ENCODE measurements at regions of chr21 and their contacts with region 1.

Region 1: DNA sequence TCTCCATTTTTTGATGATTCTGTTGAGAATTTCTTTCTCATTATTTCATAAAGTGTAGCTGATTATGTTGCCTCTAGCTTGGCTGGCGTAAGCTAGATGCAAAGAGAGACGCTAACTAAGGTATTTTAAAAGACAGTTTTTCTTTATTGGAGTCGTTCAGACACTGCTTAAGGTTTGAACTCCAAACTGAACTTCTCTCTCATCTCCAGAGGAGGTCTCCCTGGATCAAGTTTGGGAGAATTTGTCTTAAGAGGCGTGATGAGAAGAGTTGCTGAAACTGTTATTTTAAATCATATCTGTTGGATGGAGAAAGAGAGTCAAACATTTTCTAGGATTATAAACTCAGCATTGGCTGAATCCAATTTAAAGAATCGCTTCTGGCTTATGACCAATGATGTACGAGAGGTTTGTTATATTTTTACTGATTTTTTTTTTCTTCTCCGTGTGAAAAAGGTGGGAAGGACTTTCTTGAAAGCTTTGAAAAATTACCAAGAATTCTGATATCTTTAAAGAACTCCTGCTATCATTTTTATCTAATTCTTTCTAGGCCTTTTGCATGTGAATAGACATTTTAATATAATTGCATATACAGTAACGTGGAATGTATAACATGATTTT is 34.0 kb downstream of the MAP3K7CL start:
- DNase-seq: peak; percentile 89
- H3K4me3 Mint-ChIP-seq: no peak overlapping the region
- H3K27ac Mint-ChIP-seq: peak overlapping the region; percentile 93
- H3K4me1 Mint-ChIP-seq: peaks cover 49% of the 10 kb centered on the region
- H3K27me3 Mint-ChIP-seq: no peaks in the 10 kb centered on the region
- CTCF ChIP-seq: peak; percentile 84

Region 2: GRCh38 chr21:29145354-29145782 is 19.1 kb before region 1 on chr21:
- CTCF ChIA-PET with region 1: interaction called, 17 read pairs
- POLR2A ChIA-PET with region 1: interaction called, 39 read pairs
- intact Hi-C with region 1: loop called (anchors 1 kb)
- DNase-seq: peak; percentile 91
- H3K4me3 Mint-ChIP-seq: peak overlapping the region; percentile 39
- H3K27ac Mint-ChIP-seq: peak overlapping the region; percentile 92
- H3K4me1 Mint-ChIP-seq: peaks cover 23% of the 10 kb centered on the region
- H3K27me3 Mint-ChIP-seq: no peaks in the 10 kb centered on the region
- CTCF ChIP-seq: no peak

Region 3: DNA sequence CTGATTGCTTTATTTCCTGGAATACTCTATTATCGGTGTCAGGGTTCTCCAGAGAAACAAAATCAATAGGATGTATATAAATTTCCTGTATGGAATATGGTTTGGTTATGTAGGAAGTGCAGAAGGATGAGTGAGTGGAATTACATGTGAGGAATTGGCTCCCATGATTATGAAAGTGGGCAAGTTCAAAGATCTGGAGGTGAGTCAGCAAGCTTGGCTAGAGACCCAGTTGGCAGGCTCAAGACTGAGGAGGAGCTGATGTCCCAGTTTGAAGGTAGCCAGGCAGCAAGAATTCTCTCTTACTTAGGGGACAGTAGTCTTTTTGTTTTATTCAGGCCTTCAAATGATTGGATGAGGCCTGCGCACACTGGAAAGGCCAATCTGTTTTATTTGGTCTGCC is 23.5 kb after region 1 on chr21:
- CTCF ChIA-PET with region 1: interaction called, 16 read pairs
- POLR2A ChIA-PET with region 1: interaction called, 21 read pairs
- intact Hi-C with region 1: no loop called
- DNase-seq: peak; percentile 95
- H3K4me3 Mint-ChIP-seq: peak overlapping the region; percentile 51
- H3K27ac Mint-ChIP-seq: peak overlapping the region; percentile 84
- H3K4me1 Mint-ChIP-seq: peaks cover 43% of the 10 kb centered on the region
- H3K27me3 Mint-ChIP-seq: no peaks in the 10 kb centered on the region
- CTCF ChIP-seq: no peak

Region 4: DNA sequence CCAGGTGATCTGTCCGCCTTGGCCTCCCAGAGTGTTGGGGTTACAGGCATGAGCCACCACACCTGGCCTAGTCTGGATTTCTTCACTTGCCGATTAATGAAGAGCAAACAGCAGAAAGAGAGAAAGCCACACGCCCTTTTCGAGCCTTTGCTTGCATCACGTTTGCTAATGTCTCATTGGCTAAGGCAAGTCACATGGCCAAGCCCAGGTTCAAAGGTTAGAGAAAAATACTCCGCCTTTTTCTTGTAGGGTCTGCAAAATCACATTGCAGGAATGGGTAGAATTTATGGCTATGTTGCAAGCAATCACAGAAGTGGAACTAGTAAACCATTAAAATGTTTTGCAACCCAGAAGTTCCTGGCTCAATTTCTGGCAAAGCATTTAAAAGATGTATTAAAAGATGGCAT is 107.5 kb after region 1 on chr21:
- CTCF ChIA-PET with region 1: interaction called, 10 read pairs
- POLR2A ChIA-PET with region 1: no interaction called
- intact Hi-C with region 1: no loop called
- DNase-seq: no peak
- H3K4me3 Mint-ChIP-seq: no peak overlapping the region
- H3K27ac Mint-ChIP-seq: no peak overlapping the region
- H3K4me1 Mint-ChIP-seq: no peaks in the 10 kb centered on the region
- H3K27me3 Mint-ChIP-seq: no peaks in the 10 kb centered on the region
- CTCF ChIP-seq: no peak

Region 5: GRCh38 chr21:29351691-29352090 is 187.3 kb after region 1 on chr21:
- CTCF ChIA-PET with region 1: interaction called, 38 read pairs
- POLR2A ChIA-PET with region 1: interaction called, 9 read pairs
- intact Hi-C with region 1: loop called (anchors 1 kb)
- DNase-seq: no peak
- H3K4me3 Mint-ChIP-seq: no peak overlapping the region
- H3K27ac Mint-ChIP-seq: peak overlapping the region; percentile 21
- H3K4me1 Mint-ChIP-seq: peaks cover 13% of the 10 kb centered on the region
- H3K27me3 Mint-ChIP-seq: no peaks in the 10 kb centered on the region
- CTCF ChIP-seq: no peak

Region 6: GRCh38 chr21:29849735-29850176 is 685.3 kb after region 1 on chr21:
- CTCF ChIA-PET with region 1: interaction called, 4 read pairs
- POLR2A ChIA-PET with region 1: no interaction called
- intact Hi-C with region 1: loop called (anchors 1 kb)
- DNase-seq: peak; percentile 69
- H3K4me3 Mint-ChIP-seq: no peak overlapping the region
- H3K27ac Mint-ChIP-seq: no peak overlapping the region
- H3K4me1 Mint-ChIP-seq: no peaks in the 10 kb centered on the region
- H3K27me3 Mint-ChIP-seq: no peaks in the 10 kb centered on the region
- CTCF ChIP-seq: peak; percentile 77

Region 7: DNA sequence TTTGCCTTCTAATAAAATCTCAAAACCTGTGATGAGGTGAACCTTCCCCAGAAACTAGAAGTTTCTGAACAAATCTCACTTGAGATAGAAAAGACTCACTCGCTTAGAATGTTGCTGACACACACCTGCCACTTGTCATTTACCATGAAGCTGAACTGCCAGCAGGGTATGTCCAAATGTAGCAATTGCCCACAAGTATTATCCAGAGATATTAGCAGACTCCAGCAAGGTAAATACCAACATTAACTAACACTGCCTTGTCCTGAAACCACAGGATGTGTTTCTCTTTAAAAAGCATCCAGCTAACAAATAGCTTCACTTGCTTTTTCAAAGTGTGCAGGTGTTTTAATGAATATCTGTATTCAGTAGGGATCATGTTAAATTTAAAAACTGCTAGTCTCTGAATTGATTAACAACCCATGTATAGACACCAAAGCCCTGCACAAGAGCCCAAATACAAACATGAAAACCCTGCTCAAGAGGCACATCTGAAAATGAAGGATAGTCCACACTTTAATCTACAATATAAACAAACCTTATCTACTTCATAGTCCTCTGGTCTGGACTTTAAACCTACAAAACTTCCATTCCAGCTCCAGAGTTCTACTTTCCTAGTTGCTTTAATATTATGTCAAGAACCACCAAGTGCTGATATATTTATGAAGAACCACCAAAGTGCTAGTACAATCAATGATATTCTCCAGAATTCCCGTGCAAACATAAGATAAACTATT is 1629.3 kb after region 1 on chr21:
- CTCF ChIA-PET with region 1: no interaction called
- POLR2A ChIA-PET with region 1: no interaction called
- intact Hi-C with region 1: no loop called
- DNase-seq: no peak
- H3K4me3 Mint-ChIP-seq: no peak overlapping the region
- H3K27ac Mint-ChIP-seq: no peak overlapping the region
- H3K4me1 Mint-ChIP-seq: no peaks in the 10 kb centered on the region
- H3K27me3 Mint-ChIP-seq: peaks cover 56% of the 10 kb centered on the region
- CTCF ChIP-seq: no peak

Measured in MCF 10A (cell line).